Endothelial cell of umbilical vein (primary cell): ENCODE measurements at regions of chr6 and their contacts with region 1.

Region 1: DNA sequence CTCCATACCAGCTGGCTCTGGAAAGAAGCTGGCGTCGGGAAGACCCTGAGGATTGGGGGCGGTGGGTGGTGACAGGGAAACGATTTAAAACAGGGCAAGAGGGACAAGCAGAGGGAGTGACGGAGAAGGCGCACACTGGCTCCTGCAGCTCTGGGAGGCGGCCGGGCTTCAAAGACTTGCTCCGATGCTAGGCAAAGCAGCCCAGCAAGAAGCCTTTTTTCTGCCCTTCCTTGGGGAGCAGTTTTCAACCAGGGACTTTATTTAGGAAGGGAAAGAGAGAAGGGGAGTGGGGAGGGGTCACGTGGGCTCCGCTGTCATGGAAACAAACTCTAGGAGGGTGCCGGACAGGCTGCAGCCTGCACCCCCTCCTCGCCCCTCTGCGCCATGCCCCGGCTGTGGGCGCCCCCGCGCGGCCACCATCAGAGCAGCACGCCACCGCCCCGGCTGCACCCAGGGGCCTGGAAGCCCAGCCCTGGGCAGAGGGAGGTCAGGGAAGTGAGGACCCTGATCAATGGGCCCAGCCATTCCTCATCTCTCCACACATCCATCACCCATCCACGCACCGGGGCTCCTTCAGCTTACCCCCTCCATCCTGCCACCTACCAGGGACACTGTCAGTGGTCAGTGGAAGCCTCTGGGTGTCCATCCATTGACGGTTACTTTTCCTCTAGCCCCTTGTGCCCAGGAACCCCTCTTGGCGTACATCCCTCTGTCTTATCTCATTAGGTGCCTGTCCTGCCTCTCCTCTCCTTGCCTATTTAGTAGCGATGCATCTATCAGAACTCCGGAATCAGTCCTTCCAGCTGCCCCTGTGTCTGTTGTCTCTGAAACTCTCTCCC is 66.6 kb upstream of the CCDC167 start:
- DNase-seq: peak; percentile 59
- H3K4me3 ChIP-seq: peak overlapping the region in 2 of 3 experiments; percentile 14 to 26
- H3K27ac ChIP-seq: no peak overlapping the region
- H3K4me1 ChIP-seq: no peaks in the 10 kb centered on the region
- H3K27me3 ChIP-seq: peaks cover 7 to 34% of the 10 kb centered on the region in 2 experiments
- CTCF ChIP-seq: peak; percentile 88 to 96
- POLR2A ChIP-seq: no peak

Region 2: GRCh38 chr6:37324131-37325033 is 241.9 kb before region 1 on chr6:
- CTCF ChIA-PET with region 1: interaction called, 26 read pairs
- POLR2A ChIA-PET with region 1: no interaction called
- dilution Hi-C with region 1: no loop called
- intact Hi-C with region 1: loop called (anchors 1 kb)
- DNase-seq: peak; percentile 83
- H3K4me3 ChIP-seq: no peak overlapping the region
- H3K27ac ChIP-seq: peak overlapping the region; percentile 19
- H3K4me1 ChIP-seq: peaks cover 15% of the 10 kb centered on the region
- H3K27me3 ChIP-seq: no peaks in the 10 kb centered on the region
- CTCF ChIP-seq: no peak
- POLR2A ChIP-seq: no peak

Region 3: GRCh38 chr6:37483917-37484785 is 82.2 kb before region 1 on chr6:
- CTCF ChIA-PET with region 1: interaction called, 25 read pairs
- POLR2A ChIA-PET with region 1: no interaction called
- dilution Hi-C with region 1: no loop called
- intact Hi-C with region 1: loop called (anchors 1 kb)
- DNase-seq: peak; percentile 33
- H3K4me3 ChIP-seq: no peak overlapping the region
- H3K27ac ChIP-seq: no peak overlapping the region
- H3K4me1 ChIP-seq: no peaks in the 10 kb centered on the region
- H3K27me3 ChIP-seq: no peaks in the 10 kb centered on the region
- CTCF ChIP-seq: peak; percentile 65 to 91
- POLR2A ChIP-seq: no peak

Region 4: GRCh38 chr6:37499433-37500293 is 66.7 kb before region 1 on chr6 and contains the start of gene CCDC167:
- CTCF ChIA-PET with region 1: interaction called, 11 read pairs
- POLR2A ChIA-PET with region 1: no interaction called
- dilution Hi-C with region 1: no loop called
- intact Hi-C with region 1: no loop called
- DNase-seq: peak; percentile 99
- H3K4me3 ChIP-seq: peak within 1 kb of the TSS; percentile 59 to 83 (median 74)
- H3K27ac ChIP-seq: peak within 1 kb of the TSS; percentile 62
- H3K4me1 ChIP-seq: peaks cover 7% of the 10 kb centered on the region
- H3K27me3 ChIP-seq: peaks cover 6 to 11% of the 10 kb centered on the region in 2 experiments
- CTCF ChIP-seq: no peak
- POLR2A ChIP-seq: no peak
- total RNA-seq, gene CCDC167: 46.6 and 52.7 TPM in 2 replicates

Region 5: DNA sequence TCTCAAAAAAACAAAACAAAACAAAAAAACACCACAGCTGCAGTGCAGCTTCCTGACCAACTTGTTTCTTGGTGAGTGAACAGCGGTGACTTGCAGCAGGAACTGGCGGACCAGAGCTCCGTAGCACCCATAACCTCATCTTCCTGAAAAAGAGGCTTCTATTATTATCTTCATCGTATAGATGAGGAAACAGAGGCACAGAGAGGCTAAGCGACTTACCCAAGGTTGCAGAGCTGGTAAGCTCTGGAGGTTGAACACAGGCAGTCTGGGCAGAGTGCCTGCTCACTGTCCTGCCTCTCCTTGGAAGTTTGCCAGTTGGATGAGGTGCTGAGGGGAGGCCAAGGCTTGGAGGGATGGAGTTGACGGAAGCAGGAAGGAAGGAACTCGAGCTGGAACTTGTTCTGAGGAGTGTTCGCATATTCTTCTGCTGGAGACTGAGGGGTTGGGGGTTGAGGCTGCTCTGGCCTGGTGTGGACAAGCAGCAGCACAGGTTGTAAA is 18.7 kb before region 1 on chr6:
- CTCF ChIA-PET with region 1: interaction called, 19 read pairs
- POLR2A ChIA-PET with region 1: no interaction called
- dilution Hi-C with region 1: no loop called
- intact Hi-C with region 1: no loop called
- DNase-seq: peak; percentile 80
- H3K4me3 ChIP-seq: no peak overlapping the region
- H3K27ac ChIP-seq: no peak overlapping the region
- H3K4me1 ChIP-seq: peaks cover 21% of the 10 kb centered on the region
- H3K27me3 ChIP-seq: no peaks in the 10 kb centered on the region
- CTCF ChIP-seq: no peak
- POLR2A ChIP-seq: no peak

Region 6: GRCh38 chr6:37691904-37692806 is 125.8 kb after region 1 on chr6:
- CTCF ChIA-PET with region 1: interaction called, 22 read pairs
- POLR2A ChIA-PET with region 1: no interaction called
- dilution Hi-C with region 1: no loop called
- intact Hi-C with region 1: loop called (anchors 2 kb)
- DNase-seq: peak; percentile 50
- H3K4me3 ChIP-seq: no peak overlapping the region
- H3K27ac ChIP-seq: no peak overlapping the region
- H3K4me1 ChIP-seq: peaks cover 10% of the 10 kb centered on the region
- H3K27me3 ChIP-seq: peaks cover 34 to 40% of the 10 kb centered on the region in 2 experiments
- CTCF ChIP-seq: peak; percentile 96 to 97
- POLR2A ChIP-seq: no peak